CD14-positive monocyte (primary cell): ENCODE measurements at regions of chr6 and their contacts with region 1.

Region 1: DNA sequence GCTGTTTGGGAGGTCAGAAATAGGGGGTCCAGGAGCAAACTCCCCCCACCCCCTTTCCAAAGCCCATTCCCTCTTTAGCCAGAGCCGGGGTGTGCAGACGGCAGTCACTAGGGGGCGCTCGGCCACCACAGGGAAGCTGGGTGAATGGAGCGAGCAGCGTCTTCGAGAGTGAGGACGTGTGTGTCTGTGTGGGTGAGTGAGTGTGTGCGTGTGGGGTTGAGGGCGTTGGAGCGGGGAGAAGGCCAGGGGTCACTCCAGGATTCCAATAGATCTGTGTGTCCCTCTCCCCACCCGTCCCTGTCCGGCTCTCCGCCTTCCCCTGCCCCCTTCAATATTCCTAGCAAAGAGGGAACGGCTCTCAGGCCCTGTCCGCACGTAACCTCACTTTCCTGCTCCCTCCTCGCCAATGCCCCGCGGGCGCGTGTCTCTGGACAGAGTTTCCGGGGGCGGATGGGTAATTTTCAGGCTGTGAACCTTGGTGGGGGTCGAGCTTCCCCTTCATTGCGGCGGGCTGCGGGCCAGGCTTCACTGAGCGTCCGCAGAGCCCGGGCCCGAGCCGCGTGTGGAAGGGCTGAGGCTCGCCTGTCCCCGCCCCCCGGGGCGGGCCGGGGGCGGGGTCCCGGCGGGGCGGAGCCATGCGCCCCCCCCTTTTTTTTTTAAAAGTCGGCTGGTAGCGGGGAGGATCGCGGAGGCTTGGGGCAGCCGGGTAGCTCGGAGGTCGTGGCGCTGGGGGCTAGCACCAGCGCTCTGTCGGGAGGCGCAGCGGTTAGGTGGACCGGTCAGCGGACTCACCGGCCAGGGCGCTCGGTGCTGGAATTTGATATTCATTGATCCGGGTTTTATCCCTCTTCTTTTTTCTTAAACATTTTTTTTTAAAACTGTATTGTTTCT is at the start of gene VEGFA:
- DNase-seq: peak; percentile 82 to 90 (median 85)
- H3K4me3 ChIP-seq: peak within 1 kb of the TSS; percentile 90 to 97 (median 96)
- H3K4me3 Mint-ChIP-seq: peak within 1 kb of the TSS; percentile 97 to 100
- H3K27ac ChIP-seq: peak within 1 kb of the TSS; percentile 90 to 92
- H3K27ac Mint-ChIP-seq: peak within 1 kb of the TSS; percentile 93 to 98 (median 96)
- H3K4me1 ChIP-seq: peaks cover 33 to 40% of the 10 kb centered on the region in 2 donors
- H3K4me1 Mint-ChIP-seq: peaks cover 37% of the 10 kb centered on the region
- H3K27me3 ChIP-seq: no peaks in the 10 kb centered on the region
- H3K27me3 Mint-ChIP-seq: peaks cover 5 to 19% (median 13%) of the 10 kb centered on the region in 3 donors
- CTCF ChIP-seq: peak; percentile 98
- polyA plus RNA-seq, gene VEGFA: 19.0 to 454 (median 32.0) TPM

Region 2: DNA sequence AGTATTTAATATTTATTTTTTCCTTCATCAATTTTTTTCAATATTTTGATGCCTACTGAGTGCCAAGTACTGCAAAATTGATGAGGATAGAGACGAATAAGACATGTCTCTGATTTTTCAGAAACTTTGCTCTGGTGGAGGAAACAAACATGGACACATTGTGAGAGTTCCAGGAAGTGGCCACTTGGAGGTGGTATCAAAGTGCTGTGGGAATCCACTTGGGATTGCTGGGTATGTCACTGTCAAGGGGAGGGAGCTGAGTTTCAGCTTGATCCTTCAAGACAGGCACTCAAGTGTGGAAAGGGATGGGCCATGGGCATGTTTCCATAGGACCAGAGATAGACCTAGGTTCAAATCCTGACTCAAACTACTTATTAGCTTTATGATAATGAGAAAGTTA is 367.0 kb before region 1 on chr6:
- intact Hi-C with region 1: no loop called
- DNase-seq: no peak
- H3K4me3 ChIP-seq: no peak overlapping the region
- H3K4me3 Mint-ChIP-seq: no peak overlapping the region
- H3K27ac ChIP-seq: no peak overlapping the region
- H3K27ac Mint-ChIP-seq: no peak overlapping the region
- H3K4me1 ChIP-seq: no peaks in the 10 kb centered on the region
- H3K4me1 Mint-ChIP-seq: no peaks in the 10 kb centered on the region
- H3K27me3 ChIP-seq: peaks cover 4 to 10% of the 10 kb centered on the region in 2 donors
- H3K27me3 Mint-ChIP-seq: peaks cover 18 to 26% (median 18%) of the 10 kb centered on the region in 3 donors
- CTCF ChIP-seq: peak; percentile 11

Region 3: GRCh38 chr6:43723737-43724295 is 46.0 kb before region 1 on chr6:
- intact Hi-C with region 1: loop called (anchors 5 kb)
- DNase-seq: peak; percentile 78 to 89 (median 89)
- H3K4me3 ChIP-seq: peak overlapping the region in 1 of 3 experiments; percentile 53
- H3K4me3 Mint-ChIP-seq: peak overlapping the region; percentile 11 to 43
- H3K27ac ChIP-seq: peak overlapping the region in 1 of 2 donors; percentile 85
- H3K27ac Mint-ChIP-seq: peak overlapping the region; percentile 90 to 99 (median 98)
- H3K4me1 ChIP-seq: peaks cover 37 to 40% of the 10 kb centered on the region in 2 donors
- H3K4me1 Mint-ChIP-seq: peaks cover 50% of the 10 kb centered on the region
- H3K27me3 ChIP-seq: peaks cover 9 to 37% of the 10 kb centered on the region in 2 donors
- H3K27me3 Mint-ChIP-seq: peaks cover 26 to 46% (median 32%) of the 10 kb centered on the region in 3 donors
- CTCF ChIP-seq: peak; percentile 87

Region 4: GRCh38 chr6:43737272-43738081 is 32.3 kb before region 1 on chr6:
- intact Hi-C with region 1: no loop called
- DNase-seq: no peak
- H3K4me3 ChIP-seq: no peak overlapping the region
- H3K4me3 Mint-ChIP-seq: no peak overlapping the region
- H3K27ac ChIP-seq: no peak overlapping the region
- H3K27ac Mint-ChIP-seq: peak overlapping the region in 3 of 7 donors; percentile 13 to 80 (median 76)
- H3K4me1 ChIP-seq: peaks cover 10 to 14% of the 10 kb centered on the region in 2 donors
- H3K4me1 Mint-ChIP-seq: peaks cover 24% of the 10 kb centered on the region
- H3K27me3 ChIP-seq: no peaks in the 10 kb centered on the region
- H3K27me3 Mint-ChIP-seq: peaks cover 5 to 22% (median 12%) of the 10 kb centered on the region in 3 donors
- CTCF ChIP-seq: no peak

Region 5: GRCh38 chr6:43809417-43810291 is 39.9 kb after region 1 on chr6:
- intact Hi-C with region 1: loop called in 1 of 2 experiments (anchors 5 kb)
- DNase-seq: no peak
- H3K4me3 ChIP-seq: no peak overlapping the region
- H3K4me3 Mint-ChIP-seq: no peak overlapping the region
- H3K27ac ChIP-seq: no peak overlapping the region
- H3K27ac Mint-ChIP-seq: no peak overlapping the region
- H3K4me1 ChIP-seq: peaks cover 21 to 22% of the 10 kb centered on the region in 2 donors
- H3K4me1 Mint-ChIP-seq: peaks cover 27% of the 10 kb centered on the region
- H3K27me3 ChIP-seq: no peaks in the 10 kb centered on the region
- H3K27me3 Mint-ChIP-seq: peaks cover 0 to 3% (median 0%) of the 10 kb centered on the region in 3 donors
- CTCF ChIP-seq: no peak

Region 6: GRCh38 chr6:43948527-43949485 is 179.0 kb after region 1 on chr6:
- intact Hi-C with region 1: loop called in 1 of 2 experiments (anchors 5 kb)
- DNase-seq: no peak
- H3K4me3 ChIP-seq: no peak overlapping the region
- H3K4me3 Mint-ChIP-seq: no peak overlapping the region
- H3K27ac ChIP-seq: no peak overlapping the region
- H3K27ac Mint-ChIP-seq: no peak overlapping the region
- H3K4me1 ChIP-seq: no peaks in the 10 kb centered on the region
- H3K4me1 Mint-ChIP-seq: peaks cover 4% of the 10 kb centered on the region
- H3K27me3 ChIP-seq: no peaks in the 10 kb centered on the region
- H3K27me3 Mint-ChIP-seq: peaks cover 1 to 4% (median 3%) of the 10 kb centered on the region in 3 donors
- CTCF ChIP-seq: no peak

Region 7: GRCh38 chr6:44074439-44075136 is 304.8 kb after region 1 on chr6:
- intact Hi-C with region 1: loop called (anchors 2 kb)
- DNase-seq: peak; percentile 69 to 77 (median 77)
- H3K4me3 ChIP-seq: peak overlapping the region in 1 of 3 experiments; percentile 68
- H3K4me3 Mint-ChIP-seq: peak overlapping the region; percentile 44 to 85
- H3K27ac ChIP-seq: no peak overlapping the region
- H3K27ac Mint-ChIP-seq: peak overlapping the region in 6 of 7 donors; percentile 52 to 90 (median 87)
- H3K4me1 ChIP-seq: peaks cover 17 to 29% of the 10 kb centered on the region in 2 donors
- H3K4me1 Mint-ChIP-seq: peaks cover 27% of the 10 kb centered on the region
- H3K27me3 ChIP-seq: peaks cover 6 to 67% of the 10 kb centered on the region in 2 donors
- H3K27me3 Mint-ChIP-seq: peaks cover 47 to 78% (median 69%) of the 10 kb centered on the region in 3 donors
- CTCF ChIP-seq: peak; percentile 93